GM13977 (cell line): ENCODE measurements at regions of chr4 and their contacts with region 1.

Region 1: DNA sequence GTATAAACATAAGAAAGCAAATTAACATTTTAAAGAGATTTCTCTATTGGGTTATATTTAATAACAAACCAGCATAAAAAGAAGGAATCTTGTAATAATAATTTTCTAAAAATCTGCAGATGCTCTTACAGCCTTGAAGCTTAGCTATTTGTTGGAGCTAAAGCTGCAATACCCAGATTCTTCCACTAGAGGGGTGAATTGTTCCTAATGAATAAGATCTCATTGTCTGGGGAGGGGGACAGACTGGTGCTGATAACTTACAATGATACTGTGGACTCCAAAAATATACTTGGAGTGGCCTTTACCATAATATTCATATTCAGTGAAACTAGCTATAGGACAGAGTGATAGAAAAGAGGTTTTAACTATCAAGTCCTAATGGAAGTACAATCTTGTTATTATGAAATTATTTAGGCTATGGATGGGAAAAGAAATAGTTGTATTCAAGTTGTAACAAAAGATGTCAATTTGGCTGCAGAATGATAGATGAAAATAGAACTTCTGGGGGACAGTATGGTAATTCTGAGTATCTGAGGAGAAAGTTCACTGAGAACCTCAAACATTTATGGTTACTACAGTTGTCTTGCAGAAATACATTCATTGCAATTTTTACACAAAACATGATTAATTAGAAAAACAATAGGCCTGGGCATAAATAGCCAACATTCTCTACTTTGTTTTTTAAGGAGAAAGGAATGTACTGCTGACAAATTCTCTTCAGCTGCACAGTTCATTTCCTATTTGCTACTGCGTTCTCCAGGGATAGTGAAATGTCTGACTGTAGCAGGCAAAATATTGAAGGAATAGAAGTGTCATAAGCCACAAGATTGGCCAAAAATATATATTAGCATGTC is 443.3 kb downstream of the GBA3 start:
- DNase-seq: peak; percentile 22
- CTCF ChIP-seq: peak; percentile 67

Region 2: DNA sequence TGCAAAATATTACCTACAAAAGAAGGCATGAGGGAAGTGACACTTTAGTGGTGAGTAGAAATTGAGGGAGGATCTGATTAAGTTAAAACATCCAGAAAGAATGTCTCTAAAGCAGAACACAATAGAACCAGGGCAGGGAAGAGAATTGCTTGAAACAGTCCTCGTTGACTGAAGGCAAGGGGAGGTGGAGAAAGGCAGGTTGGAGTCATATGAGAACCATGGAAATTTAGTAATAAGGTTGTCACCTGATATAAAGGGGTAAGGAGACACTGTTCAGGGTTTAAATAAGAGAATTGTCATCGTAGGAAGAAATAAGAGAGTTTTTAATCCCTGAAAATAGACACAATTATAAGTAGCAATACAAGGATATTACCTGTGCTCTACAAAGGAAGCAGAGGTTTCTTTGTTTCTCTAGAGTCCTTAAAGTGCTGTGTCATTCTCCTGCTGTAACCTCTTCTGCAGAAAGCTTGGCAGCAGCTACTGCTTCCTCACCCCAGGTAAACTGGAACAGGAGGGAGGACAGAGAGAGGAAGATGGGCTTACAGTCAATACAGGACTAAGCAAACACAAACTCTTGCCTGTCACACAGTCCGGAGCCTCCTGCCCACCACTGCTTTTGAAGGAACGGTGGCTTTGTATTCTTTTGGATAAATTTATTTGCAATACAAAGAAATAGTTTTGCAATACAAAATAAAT is 495.4 kb after region 1 on chr4:
- in situ Hi-C with region 1: no loop called
- DNase-seq: no peak
- CTCF ChIP-seq: no peak

Region 3: DNA sequence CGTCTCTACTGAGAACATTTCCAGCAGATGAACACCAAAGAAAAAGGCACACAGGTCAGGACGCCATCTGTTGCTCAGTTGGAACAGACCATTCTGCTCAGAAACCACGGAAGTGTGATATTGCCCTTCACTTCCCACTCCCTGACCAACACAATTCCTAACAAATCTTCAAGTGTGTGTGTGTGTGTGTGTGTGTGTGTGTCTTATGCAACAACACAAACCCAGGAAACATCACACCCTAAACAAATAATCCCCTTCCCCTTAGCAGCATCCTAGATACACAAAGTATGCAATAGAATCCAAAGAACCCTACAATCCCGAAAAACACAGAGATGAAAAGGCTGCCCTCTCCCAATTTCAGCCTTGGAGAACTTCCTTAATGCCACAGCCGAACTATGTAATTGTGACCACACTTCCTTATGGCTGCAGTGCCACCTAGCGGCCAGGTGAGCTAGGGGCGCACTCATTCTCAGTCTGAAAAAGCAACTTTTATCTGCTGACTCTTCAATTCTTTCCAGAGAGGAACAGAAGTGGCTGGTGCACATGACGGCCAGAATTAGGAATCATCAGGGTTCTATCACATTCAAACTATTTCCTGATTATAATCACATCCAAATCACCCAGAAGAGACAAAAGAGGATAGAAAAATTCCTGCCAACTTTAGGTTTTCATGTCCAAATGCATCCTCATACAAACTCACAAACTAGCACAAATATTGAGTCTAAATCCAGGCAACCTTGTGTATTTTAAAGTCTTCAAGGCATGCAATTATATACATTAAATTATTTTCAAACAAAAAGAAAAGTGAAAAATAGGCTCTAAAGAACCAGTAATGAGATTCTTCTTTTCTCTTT is 1283.4 kb after region 1 on chr4:
- in situ Hi-C with region 1: loop called (anchors 25 kb)
- DNase-seq: peak; percentile 74
- CTCF ChIP-seq: peak; percentile 97